Activated T-helper 2 cell treated with anti-CD3 and anti-CD28 coated beads, Interferon-gamma antibody, Interleukin-2, Interleukin-4, amounts not matched to agents 10 μg/mL and 5 μg/mL and 100 μg/mL, durations not matched to agents 14 hours and 24 hours and 36 hours (primary cell): ENCODE measurements at regions of chr14 and their contacts with region 1.

Region 1: GRCh38 chr14:21269252-21270046 is at the start of gene HNRNPC:
- DNase-seq: peak; percentile 100
- H3K4me3 Mint-ChIP-seq: peak within 1 kb of the TSS; percentile 99
- H3K27ac Mint-ChIP-seq: peak within 1 kb of the TSS; percentile 100
- H3K4me1 Mint-ChIP-seq: peaks cover 29% of the 10 kb centered on the region
- H3K27me3 Mint-ChIP-seq: no peaks in the 10 kb centered on the region
- total RNA-seq, gene HNRNPC: 972 and 976 TPM in 2 replicates

Region 2: GRCh38 chr14:21308479-21309237 is 39.2 kb after region 1 on chr14:
- intact Hi-C with region 1: loop called (anchors 2 kb)
- DNase-seq: peak; percentile 67
- H3K4me3 Mint-ChIP-seq: peak overlapping the region; percentile 74
- H3K27ac Mint-ChIP-seq: peak overlapping the region; percentile 53
- H3K4me1 Mint-ChIP-seq: peaks cover 17% of the 10 kb centered on the region
- H3K27me3 Mint-ChIP-seq: peaks cover 6% of the 10 kb centered on the region

Region 3: GRCh38 chr14:21510735-21511657 is 241.5 kb after region 1 on chr14 and contains the start of gene METTL3:
- intact Hi-C with region 1: loop called (anchors 10 kb)
- DNase-seq: peak; percentile 91
- H3K4me3 Mint-ChIP-seq: peak within 1 kb of the TSS; percentile 88
- H3K27ac Mint-ChIP-seq: peak within 1 kb of the TSS; percentile 97
- H3K4me1 Mint-ChIP-seq: peaks cover 28% of the 10 kb centered on the region
- H3K27me3 Mint-ChIP-seq: peaks cover 5% of the 10 kb centered on the region
- total RNA-seq, gene METTL3: 76.7 and 80.5 TPM in 2 replicates